H1 (cell line): ENCODE measurements at regions of chr11 and their contacts with region 1.

Region 1: GRCh38 chr11:131668500-131669400 is 298.3 kb downstream of the NTM start:
- DNase-seq: peak in 1 of 2 experiments; percentile 91
- H3K4me3 ChIP-seq: no peak overlapping the region
- H3K27ac ChIP-seq: no peak overlapping the region
- H3K4me1 ChIP-seq: peaks cover 0 to 2% (median under 1%) of the 10 kb centered on the region in 4 experiments; a peak in 2 of 7 replicates
- H3K27me3 ChIP-seq: no peaks in the 10 kb centered on the region; a peak in 1 of 7 replicates
- CTCF ChIP-seq: peak; percentile 70 to 82 (median 74)
- EP300 ChIP-seq: no peak
- POLR2A ChIP-seq: no peak
- RAD21 ChIP-seq: peak; percentile 47 to 57

Region 2: GRCh38 chr11:131544591-131544990 is 124.2 kb before region 1 on chr11:
- CTCF ChIA-PET with region 1: interaction called, 20 read pairs
- POLR2A ChIA-PET with region 1: no interaction called
- DNase-seq: peak; percentile 19 to 63
- H3K4me3 ChIP-seq: no peak overlapping the region
- H3K27ac ChIP-seq: no peak overlapping the region
- H3K4me1 ChIP-seq: peaks cover 0 to 4% (median 3%) of the 10 kb centered on the region in 4 experiments; a peak in 6 of 7 replicates
- H3K27me3 ChIP-seq: no peaks in the 10 kb centered on the region
- CTCF ChIP-seq: peak; percentile 51 to 71 (median 63)
- EP300 ChIP-seq: no peak
- POLR2A ChIP-seq: no peak
- RAD21 ChIP-seq: peak; percentile 73 to 83

Region 3: DNA sequence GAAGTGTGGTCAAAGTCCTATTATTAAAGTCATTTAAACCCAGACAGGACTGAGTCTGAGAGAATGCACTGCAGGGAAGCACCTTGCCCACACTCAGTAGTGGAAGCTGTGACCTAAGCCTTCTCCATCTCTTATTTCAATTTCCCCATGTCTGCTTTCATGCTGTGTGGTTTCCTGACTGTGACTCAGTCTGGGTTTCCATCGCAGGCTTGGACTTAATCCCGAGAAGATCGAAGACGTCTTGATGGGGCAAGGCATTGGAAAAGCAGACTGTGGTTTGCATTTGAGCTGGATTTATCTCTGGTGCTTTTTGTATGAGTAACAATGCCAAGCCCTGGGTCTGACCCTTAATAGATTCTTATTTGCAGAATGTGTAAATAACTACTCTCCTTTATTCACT is 59.4 kb before region 1 on chr11:
- CTCF ChIA-PET with region 1: interaction called, 20 read pairs
- POLR2A ChIA-PET with region 1: no interaction called
- DNase-seq: no peak
- H3K4me3 ChIP-seq: no peak overlapping the region
- H3K27ac ChIP-seq: no peak overlapping the region
- H3K4me1 ChIP-seq: peaks cover 2 to 11% (median 6%) of the 10 kb centered on the region in 4 experiments; a peak in 4 of 7 replicates
- H3K27me3 ChIP-seq: peaks cover 0 to 4% (median 3%) of the 10 kb centered on the region in 4 experiments; a peak in 3 of 7 replicates
- CTCF ChIP-seq: no peak
- EP300 ChIP-seq: no peak
- POLR2A ChIP-seq: no peak
- RAD21 ChIP-seq: no peak

Region 4: GRCh38 chr11:131637469-131638175 is 31.1 kb before region 1 on chr11:
- CTCF ChIA-PET with region 1: interaction called, 16 read pairs
- POLR2A ChIA-PET with region 1: no interaction called
- DNase-seq: no peak
- H3K4me3 ChIP-seq: no peak overlapping the region
- H3K27ac ChIP-seq: no peak overlapping the region
- H3K4me1 ChIP-seq: peaks cover 5 to 20% (median 15%) of the 10 kb centered on the region in 4 experiments; a peak in 4 of 7 replicates
- H3K27me3 ChIP-seq: no peaks in the 10 kb centered on the region
- CTCF ChIP-seq: no peak
- EP300 ChIP-seq: no peak
- POLR2A ChIP-seq: no peak
- RAD21 ChIP-seq: no peak

Region 5: GRCh38 chr11:131767421-131767820 is 98.7 kb after region 1 on chr11:
- CTCF ChIA-PET with region 1: no interaction called
- POLR2A ChIA-PET with region 1: no interaction called
- DNase-seq: no peak
- H3K4me3 ChIP-seq: no peak overlapping the region
- H3K27ac ChIP-seq: no peak overlapping the region
- H3K4me1 ChIP-seq: peaks cover 0 to 5% (median 2%) of the 10 kb centered on the region in 4 experiments; a peak in 4 of 7 replicates
- H3K27me3 ChIP-seq: no peaks in the 10 kb centered on the region
- CTCF ChIP-seq: no peak
- EP300 ChIP-seq: no peak
- POLR2A ChIP-seq: no peak
- RAD21 ChIP-seq: no peak